SK-N-SH (cell line): ENCODE measurements at regions of chr11 and their contacts with region 1.

Region 1: GRCh38 chr11:7904914-7905313 is 26.2 kb downstream of the OR10A6 start:
- DNase-seq: no peak
- H3K4me3 ChIP-seq: no peak overlapping the region
- H3K27ac ChIP-seq: no peak overlapping the region
- H3K4me1 ChIP-seq: no peaks in the 10 kb centered on the region; a peak in 2 of 4 replicates
- H3K27me3 ChIP-seq: no peaks in the 10 kb centered on the region
- CTCF ChIP-seq: peak; percentile 57
- EP300 ChIP-seq: no peak
- RAD21 ChIP-seq: peak; percentile 48

Region 2: GRCh38 chr11:7473717-7474116 is 431.2 kb before region 1 on chr11:
- CTCF ChIA-PET with region 1: no interaction called
- POLR2A ChIA-PET with region 1: no interaction called
- DNase-seq: no peak
- H3K4me3 ChIP-seq: no peak overlapping the region
- H3K27ac ChIP-seq: no peak overlapping the region
- H3K4me1 ChIP-seq: no peaks in the 10 kb centered on the region
- H3K27me3 ChIP-seq: no peaks in the 10 kb centered on the region
- CTCF ChIP-seq: no peak
- EP300 ChIP-seq: no peak
- RAD21 ChIP-seq: no peak

Region 3: DNA sequence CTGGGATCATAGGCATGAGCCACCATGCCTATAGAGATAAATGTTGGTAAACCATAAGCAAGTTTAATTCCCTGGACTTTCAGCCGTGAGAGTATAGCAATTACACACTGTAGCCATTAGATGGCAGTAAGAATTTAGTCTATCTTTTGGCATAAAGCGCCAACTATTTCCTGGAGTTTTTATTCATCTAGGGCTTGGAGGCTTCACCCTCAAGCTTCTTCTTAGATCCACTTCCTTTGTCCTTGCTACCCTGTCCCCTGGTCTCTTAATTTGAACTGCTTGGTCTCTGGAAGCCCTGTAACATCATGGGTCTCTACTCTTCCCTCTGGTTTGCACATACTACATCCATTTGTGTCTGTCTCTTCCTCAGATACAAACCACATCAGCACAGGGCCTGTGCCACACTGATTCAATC is 12.1 kb before region 1 on chr11:
- CTCF ChIA-PET with region 1: interaction called, 28 read pairs
- POLR2A ChIA-PET with region 1: no interaction called
- DNase-seq: peak; percentile 56
- H3K4me3 ChIP-seq: no peak overlapping the region; a peak in 1 of 4 replicates
- H3K27ac ChIP-seq: 0 out of 4 replicates have a peak overlapping the region, but pooled peaks of 1 of the 2 experiments have one; percentile 4
- H3K4me1 ChIP-seq: no peaks in the 10 kb centered on the region
- H3K27me3 ChIP-seq: no peaks in the 10 kb centered on the region
- CTCF ChIP-seq: peak; percentile 80
- EP300 ChIP-seq: no peak
- RAD21 ChIP-seq: peak; percentile 78